HCT116 (cell line): ENCODE measurements at regions of chr16 and their contacts with region 1.

Region 1: DNA sequence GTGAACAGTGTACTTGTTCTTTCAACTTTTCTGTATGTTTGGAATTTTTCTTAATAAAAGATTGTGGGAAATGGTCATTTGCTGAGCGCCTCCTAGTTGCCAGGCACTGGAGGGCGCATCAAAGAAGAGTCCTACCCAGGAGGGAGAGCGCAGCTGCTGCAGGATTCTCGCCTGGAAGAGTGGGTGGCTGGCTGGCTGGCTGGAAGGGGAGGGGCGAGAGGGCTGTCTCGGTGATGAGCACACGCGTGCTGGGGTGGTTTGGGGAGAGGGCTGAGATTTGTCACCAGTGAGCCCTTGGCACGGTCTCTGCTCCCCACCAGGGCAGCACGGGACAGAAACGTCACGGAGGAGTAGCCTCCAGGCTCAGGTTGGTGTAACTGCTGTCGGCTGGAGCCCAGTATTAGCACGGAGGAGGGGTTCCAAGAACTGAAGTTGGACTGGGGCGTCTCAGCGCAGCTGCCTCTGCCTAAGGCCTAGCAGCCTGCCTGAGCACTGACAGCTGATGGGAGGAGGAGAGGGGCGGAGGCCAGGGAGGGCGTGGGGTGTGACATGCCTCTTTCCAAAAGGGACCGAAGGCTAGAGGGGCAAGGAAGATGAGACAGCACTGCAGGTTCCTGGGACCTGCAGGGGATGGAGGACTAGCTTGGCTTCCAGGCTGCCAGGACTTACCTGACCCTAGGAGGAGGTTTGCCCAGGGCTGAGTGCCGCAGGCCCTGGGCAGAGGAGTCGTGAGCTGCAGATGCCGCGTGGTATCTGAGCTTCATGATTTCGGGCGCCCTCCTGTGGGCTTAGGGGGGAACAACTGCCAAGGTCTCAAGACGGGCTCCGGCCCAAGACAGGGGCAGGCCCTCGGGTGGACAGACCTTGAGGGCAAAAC is 5.7 kb downstream of the LDHD start:
- DNase-seq: peak; percentile 80
- ATAC-seq: peak; percentile 76
- H3K4me3 ChIP-seq: peak overlapping the region in 1 of 2 experiments; percentile 36; a peak in 2 of 4 replicates
- H3K27ac ChIP-seq: peak overlapping the region; percentile 91
- H3K4me1 ChIP-seq: peaks cover 35 to 49% of the 10 kb centered on the region in 2 experiments
- H3K27me3 ChIP-seq: no peaks in the 10 kb centered on the region
- CTCF ChIP-seq: peak in 2 of 3 experiments; percentile 84 to 87; a peak in 4 of 6 replicates
- POLR2A ChIP-seq: no peak
- RAD21 ChIP-seq: no peak

Region 2: DNA sequence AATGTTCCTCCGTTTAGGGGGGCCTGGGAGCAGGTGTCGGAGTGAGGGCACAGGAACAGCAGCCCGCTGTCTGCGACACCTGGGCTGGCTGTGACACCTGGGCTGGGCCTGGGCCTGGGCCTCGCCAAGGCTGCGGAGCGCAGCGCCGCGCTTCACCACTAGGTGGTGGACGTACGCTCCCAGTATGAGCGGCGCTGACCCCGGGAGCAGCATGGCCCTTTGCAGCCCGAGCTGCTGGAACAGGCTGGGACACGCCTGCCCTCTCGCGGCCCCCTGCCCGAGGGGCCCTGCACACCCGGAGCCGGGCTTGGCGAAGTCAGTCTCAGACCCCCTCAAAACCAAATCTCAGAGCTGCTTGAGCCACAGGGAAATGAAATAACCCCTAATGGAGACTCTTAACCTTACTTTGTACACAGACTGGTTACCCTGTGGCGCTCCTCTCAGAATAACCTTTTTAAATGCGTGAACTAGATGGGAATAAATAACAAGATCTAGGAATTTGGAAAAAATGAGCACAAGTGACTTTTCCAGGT is 297.7 kb before region 1 on chr16:
- CTCF ChIA-PET with region 1: interaction called, 4 read pairs
- POLR2A ChIA-PET with region 1: no interaction called
- RAD21 ChIA-PET with region 1: no interaction called
- intact Hi-C with region 1: loop called (anchors 10 kb)
- DNase-seq: peak; percentile 76
- ATAC-seq: peak; percentile 100
- H3K4me3 ChIP-seq: 0 out of 4 replicates have a peak overlapping the region, but pooled peaks of 1 of the 2 experiments have one; percentile 15
- H3K27ac ChIP-seq: no peak overlapping the region
- H3K4me1 ChIP-seq: peaks cover 0 to 10% of the 10 kb centered on the region in 2 experiments; a peak in 2 of 4 replicates
- H3K27me3 ChIP-seq: no peaks in the 10 kb centered on the region
- CTCF ChIP-seq: peak; percentile 92 to 99 (median 98)
- POLR2A ChIP-seq: no peak
- RAD21 ChIP-seq: peak; percentile 95

Region 3: GRCh38 chr16:74984535-74985296 is 126.2 kb before region 1 on chr16 and contains the start of gene WDR59:
- CTCF ChIA-PET with region 1: interaction called, 39 read pairs
- POLR2A ChIA-PET with region 1: interaction called, 17 read pairs
- RAD21 ChIA-PET with region 1: interaction called, 5 to 6 read pairs
- intact Hi-C with region 1: loop called (anchors 2 kb)
- DNase-seq: no peak
- ATAC-seq: peak; percentile 95
- H3K4me3 ChIP-seq: peak within 1 kb of the TSS; percentile 99 to 100
- H3K27ac ChIP-seq: peak within 1 kb of the TSS; percentile 74
- H3K4me1 ChIP-seq: peaks cover 5 to 22% of the 10 kb centered on the region in 2 experiments
- H3K27me3 ChIP-seq: no peaks in the 10 kb centered on the region
- CTCF ChIP-seq: no peak
- POLR2A ChIP-seq: no peak
- RAD21 ChIP-seq: no peak
- total RNA-seq, gene WDR59: 96.9 TPM

Region 4: GRCh38 chr16:75011634-75012307 is 99.1 kb before region 1 on chr16:
- CTCF ChIA-PET with region 1: interaction called, 17 read pairs
- POLR2A ChIA-PET with region 1: interaction called, 4 read pairs
- RAD21 ChIA-PET with region 1: interaction called, 3 to 4 read pairs
- intact Hi-C with region 1: no loop called
- DNase-seq: peak; percentile 75
- ATAC-seq: peak; percentile 83
- H3K4me3 ChIP-seq: peak overlapping the region; percentile 24 to 46
- H3K27ac ChIP-seq: peak overlapping the region; percentile 88
- H3K4me1 ChIP-seq: peaks cover 65 to 76% of the 10 kb centered on the region in 2 experiments
- H3K27me3 ChIP-seq: no peaks in the 10 kb centered on the region
- CTCF ChIP-seq: no peak
- POLR2A ChIP-seq: no peak
- RAD21 ChIP-seq: peak; percentile 38; the same call in 1 of the 2 replicates

Region 5: DNA sequence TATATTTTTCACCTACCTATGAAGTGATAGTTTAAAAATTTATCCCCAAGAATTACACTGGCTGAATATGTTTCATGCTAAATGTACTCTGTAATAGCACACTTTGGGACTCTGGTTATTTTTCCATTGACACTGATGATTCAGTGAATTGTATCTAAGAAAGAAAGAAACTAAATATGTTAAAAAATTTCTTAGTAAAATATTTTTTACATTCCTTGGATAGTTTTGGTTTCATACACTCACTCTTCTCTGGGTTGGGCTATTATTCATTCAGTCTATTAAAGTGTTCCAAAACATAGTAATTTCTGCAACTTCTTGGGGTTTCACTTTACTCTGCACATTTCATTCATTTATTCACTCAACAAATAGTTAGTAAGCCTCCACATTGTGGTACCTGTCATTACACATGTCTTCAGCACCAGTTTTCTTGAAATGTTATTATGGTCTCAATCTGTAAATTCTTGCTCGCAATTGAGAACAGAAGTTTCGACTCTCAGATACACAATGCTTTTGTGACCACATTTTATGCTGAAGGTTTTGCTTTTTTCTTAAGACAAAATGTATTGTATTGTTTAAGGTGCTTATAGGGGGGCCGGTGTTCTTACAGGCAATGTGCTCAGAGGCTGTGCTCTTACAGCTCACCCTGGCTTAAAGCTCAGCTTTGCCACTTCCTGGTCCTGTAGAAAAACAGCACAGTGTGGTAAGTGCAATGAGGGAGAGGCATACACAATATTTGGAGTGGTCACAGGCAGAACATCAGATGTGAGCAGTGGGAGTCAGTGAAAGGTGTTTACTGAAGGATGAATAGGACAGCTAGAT is 1183.7 kb after region 1 on chr16:
- CTCF ChIA-PET with region 1: no interaction called
- POLR2A ChIA-PET with region 1: no interaction called
- RAD21 ChIA-PET with region 1: no interaction called
- intact Hi-C with region 1: no loop called
- DNase-seq: no peak
- ATAC-seq: no peak
- H3K4me3 ChIP-seq: no peak overlapping the region
- H3K27ac ChIP-seq: no peak overlapping the region
- H3K4me1 ChIP-seq: no peaks in the 10 kb centered on the region
- H3K27me3 ChIP-seq: no peaks in the 10 kb centered on the region
- CTCF ChIP-seq: no peak
- POLR2A ChIP-seq: no peak
- RAD21 ChIP-seq: no peak

Region 6: DNA sequence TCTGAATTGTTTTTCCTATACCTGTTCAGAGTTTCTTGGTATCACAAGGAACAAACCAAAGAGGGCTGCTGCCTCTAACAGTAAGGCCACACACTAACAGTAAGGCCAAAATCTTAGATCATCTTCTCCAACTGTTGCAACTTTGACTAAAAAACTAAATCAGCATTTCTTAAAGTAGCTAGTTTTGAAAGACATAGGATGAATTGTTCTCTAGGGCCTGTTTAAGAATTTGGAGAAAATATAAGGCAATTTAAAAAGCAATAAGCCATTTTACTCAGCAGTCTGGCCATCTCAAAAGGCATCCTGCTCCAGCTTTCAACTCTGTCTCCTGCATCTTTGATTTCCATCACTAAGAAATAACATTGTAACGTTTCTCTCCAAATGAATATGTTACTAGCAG is 1975.1 kb after region 1 on chr16:
- CTCF ChIA-PET with region 1: no interaction called
- POLR2A ChIA-PET with region 1: no interaction called
- RAD21 ChIA-PET with region 1: no interaction called
- intact Hi-C with region 1: no loop called
- DNase-seq: no peak
- ATAC-seq: no peak
- H3K4me3 ChIP-seq: no peak overlapping the region
- H3K27ac ChIP-seq: no peak overlapping the region
- H3K4me1 ChIP-seq: no peaks in the 10 kb centered on the region
- H3K27me3 ChIP-seq: peaks cover 27% of the 10 kb centered on the region
- CTCF ChIP-seq: no peak
- POLR2A ChIP-seq: no peak
- RAD21 ChIP-seq: no peak